ENCODE measurements at regions of chr9 and their contacts with region 1.

Region 1: GRCh38 chr9:21789541-21790037 is 12.8 kb upstream of the MTAP start:
- DNase-seq: peak; percentile 92
- ATAC-seq: peak; percentile 76
- H3K4me3 ChIP-seq: no peak overlapping the region
- H3K27ac ChIP-seq: peak overlapping the region; percentile 97
- H3K4me1 ChIP-seq: peaks cover 28 to 57% of the 10 kb centered on the region in 2 experiments
- H3K27me3 ChIP-seq: no peaks in the 10 kb centered on the region
- CTCF ChIP-seq: peak; percentile 50 to 96 (median 85)
- POLR2A ChIP-seq: no peak
- RAD21 ChIP-seq: peak; percentile 91

Region 2: GRCh38 chr9:20835364-20836286 is 954.0 kb before region 1 on chr9:
- CTCF ChIA-PET with region 1: no interaction called
- POLR2A ChIA-PET with region 1: no interaction called
- RAD21 ChIA-PET with region 1: no interaction called
- intact Hi-C with region 1: no loop called
- DNase-seq: no peak
- ATAC-seq: no peak; the same call in 1 of the 2 replicates
- H3K4me3 ChIP-seq: no peak overlapping the region
- H3K27ac ChIP-seq: no peak overlapping the region
- H3K4me1 ChIP-seq: peaks cover 0 to 2% of the 10 kb centered on the region in 2 experiments; a peak in 2 of 4 replicates
- H3K27me3 ChIP-seq: no peaks in the 10 kb centered on the region
- CTCF ChIP-seq: no peak
- POLR2A ChIP-seq: no peak
- RAD21 ChIP-seq: no peak

Region 3: DNA sequence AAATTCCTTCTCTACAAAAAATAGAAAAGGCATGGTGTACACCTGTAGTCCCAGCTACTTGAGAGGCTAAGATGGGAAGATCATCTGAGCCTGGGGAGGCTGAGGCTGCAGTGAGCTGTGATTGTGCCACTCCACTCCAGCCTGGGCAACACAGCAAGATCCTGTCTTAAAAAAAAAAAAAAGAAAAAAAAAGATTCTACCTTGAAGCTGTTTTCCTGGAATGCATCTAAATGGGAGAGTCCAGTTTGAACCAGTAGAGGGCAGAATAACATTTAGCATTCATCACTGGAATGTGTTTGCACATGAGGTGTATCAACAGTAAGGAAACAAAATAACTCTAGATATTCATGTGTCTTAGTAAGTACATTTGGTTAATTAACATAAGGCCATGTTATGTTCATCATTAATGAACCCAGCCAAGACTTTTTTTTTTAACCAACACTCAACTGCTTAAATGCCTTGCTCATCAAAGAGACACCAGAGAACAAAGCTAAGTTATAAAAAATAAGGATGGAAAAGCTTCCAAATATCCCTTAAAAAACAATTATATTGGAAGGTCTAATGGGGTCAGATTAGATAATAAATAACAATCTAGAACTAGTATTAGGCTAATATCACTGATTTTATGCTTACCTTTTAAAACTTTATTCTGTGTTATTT is 323.6 kb before region 1 on chr9:
- CTCF ChIA-PET with region 1: interaction called, 25 read pairs
- POLR2A ChIA-PET with region 1: interaction called, 3 read pairs
- RAD21 ChIA-PET with region 1: interaction called in 1 of 2 experiments, 6 read pairs
- intact Hi-C with region 1: loop called (anchors 2 kb)
- DNase-seq: peak; percentile 61
- ATAC-seq: peak; percentile 89
- H3K4me3 ChIP-seq: no peak overlapping the region
- H3K27ac ChIP-seq: no peak overlapping the region
- H3K4me1 ChIP-seq: 0 out of 4 replicates have a peak, but pooled peaks cover 0 to 3% of the 10 kb centered on the region in 2 experiments
- H3K27me3 ChIP-seq: no peaks in the 10 kb centered on the region
- CTCF ChIP-seq: peak; percentile 71 to 75 (median 75); a peak in 5 of 6 replicates
- POLR2A ChIP-seq: no peak
- RAD21 ChIP-seq: peak; percentile 85

Region 4: DNA sequence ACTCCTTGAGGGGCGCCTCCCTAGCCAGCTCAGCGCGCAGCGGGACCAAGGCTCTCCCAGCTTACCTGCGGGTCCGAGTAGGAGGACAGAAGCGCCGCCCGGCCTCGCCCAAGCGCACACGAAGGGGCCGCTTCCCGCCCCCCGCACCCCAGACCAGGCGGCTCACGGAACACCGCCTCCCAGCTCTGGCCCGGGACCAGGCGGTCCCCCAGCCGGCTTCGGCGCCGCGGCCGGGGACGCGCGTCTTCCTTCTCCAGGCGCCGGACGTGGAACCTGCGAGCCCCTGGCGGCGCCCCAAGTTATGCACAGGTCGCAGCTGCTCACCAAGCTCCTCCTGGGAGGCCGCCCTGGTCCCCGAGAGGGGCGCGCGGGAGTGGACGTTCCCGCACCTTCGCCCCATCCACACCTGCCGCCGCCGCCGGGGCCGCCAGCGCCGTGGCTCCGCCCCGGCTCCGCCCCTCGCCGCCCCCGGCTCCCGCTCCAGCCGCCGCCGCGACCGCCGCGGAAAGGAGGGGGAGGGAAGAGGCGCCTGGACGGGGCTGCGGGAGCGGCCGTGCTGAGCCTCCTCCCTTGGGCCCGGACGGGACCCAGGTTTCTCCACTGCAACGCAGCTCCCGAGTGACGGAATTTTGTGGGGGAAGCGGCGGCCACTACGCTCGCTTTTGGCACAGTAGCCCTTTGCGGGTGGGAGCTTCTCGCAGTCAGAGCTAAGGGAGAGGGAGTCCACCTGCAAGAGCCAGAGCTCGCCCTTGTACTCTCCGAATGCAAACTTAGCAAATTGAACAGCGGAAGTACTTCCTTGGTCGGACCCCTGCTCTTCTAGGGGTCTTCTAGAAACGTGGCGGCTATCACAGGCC is 229.9 kb before region 1 on chr9:
- CTCF ChIA-PET with region 1: interaction called, 5 read pairs
- POLR2A ChIA-PET with region 1: interaction called, 7 read pairs
- RAD21 ChIA-PET with region 1: no interaction called
- intact Hi-C with region 1: loop called (anchors 2 kb)
- DNase-seq: no peak
- ATAC-seq: peak; percentile 86
- H3K4me3 ChIP-seq: peak overlapping the region; percentile 65 to 72
- H3K27ac ChIP-seq: peak overlapping the region; percentile 99
- H3K4me1 ChIP-seq: peaks cover 59 to 83% of the 10 kb centered on the region in 2 experiments
- H3K27me3 ChIP-seq: no peaks in the 10 kb centered on the region
- CTCF ChIP-seq: 0 out of 6 replicates have a peak, but pooled peaks of 1 of the 3 experiments have one; percentile 2
- POLR2A ChIP-seq: no peak
- RAD21 ChIP-seq: peak; percentile 33; the same call in 1 of the 2 replicates

Region 5: GRCh38 chr9:21591221-21592062 is 198.1 kb before region 1 on chr9:
- CTCF ChIA-PET with region 1: interaction called, 3 read pairs
- POLR2A ChIA-PET with region 1: interaction called, 11 read pairs
- RAD21 ChIA-PET with region 1: interaction called in 1 of 2 experiments, 5 read pairs
- intact Hi-C with region 1: loop called (anchors 5 kb)
- DNase-seq: peak; percentile 94
- ATAC-seq: peak; percentile 82
- H3K4me3 ChIP-seq: peak overlapping the region; percentile 51 to 66
- H3K27ac ChIP-seq: peak overlapping the region; percentile 99
- H3K4me1 ChIP-seq: peaks cover 64 to 98% of the 10 kb centered on the region in 2 experiments
- H3K27me3 ChIP-seq: no peaks in the 10 kb centered on the region
- CTCF ChIP-seq: no peak
- POLR2A ChIP-seq: no peak
- RAD21 ChIP-seq: peak; percentile 43; the same call in 1 of the 2 replicates

Region 6: GRCh38 chr9:21709464-21710058 is 80.0 kb before region 1 on chr9:
- CTCF ChIA-PET with region 1: interaction called, 29 read pairs
- POLR2A ChIA-PET with region 1: interaction called, 5 read pairs
- RAD21 ChIA-PET with region 1: interaction called in 1 of 2 experiments, 5 read pairs
- intact Hi-C with region 1: loop called (anchors 1 kb)
- DNase-seq: peak; percentile 80
- ATAC-seq: peak; percentile 49
- H3K4me3 ChIP-seq: no peak overlapping the region
- H3K27ac ChIP-seq: peak overlapping the region; percentile 95
- H3K4me1 ChIP-seq: peaks cover 73 to 78% of the 10 kb centered on the region in 2 experiments
- H3K27me3 ChIP-seq: no peaks in the 10 kb centered on the region
- CTCF ChIP-seq: peak; percentile 69 to 92 (median 74)
- POLR2A ChIP-seq: no peak
- RAD21 ChIP-seq: peak; percentile 74

Region 7: GRCh38 chr9:22060831-22061383 is 271.3 kb after region 1 on chr9:
- CTCF ChIA-PET with region 1: no interaction called
- POLR2A ChIA-PET with region 1: no interaction called
- RAD21 ChIA-PET with region 1: no interaction called
- intact Hi-C with region 1: no loop called
- DNase-seq: no peak
- ATAC-seq: no peak
- H3K4me3 ChIP-seq: no peak overlapping the region
- H3K27ac ChIP-seq: no peak overlapping the region
- H3K4me1 ChIP-seq: no peaks in the 10 kb centered on the region
- H3K27me3 ChIP-seq: no peaks in the 10 kb centered on the region
- CTCF ChIP-seq: no peak
- POLR2A ChIP-seq: no peak
- RAD21 ChIP-seq: no peak